ENCODE measurements at regions of chr6 and their contacts with region 1.

Region 1: GRCh38 chr6:20291764-20292580 is 79.7 kb upstream of the MBOAT1 start:
- DNase-seq: peak in 4 of 5 donors; percentile 64 to 76 (median 69)
- ATAC-seq: peak in 3 of 4 donors; percentile 80 to 95 (median 92)
- H3K4me3 ChIP-seq: no peak overlapping the region
- H3K27ac ChIP-seq: no peak overlapping the region
- H3K4me1 ChIP-seq: peaks cover 0 to 4% (median 0%) of the 10 kb centered on the region in 12 donors
- H3K27me3 ChIP-seq: no peaks in the 10 kb centered on the region
- CTCF ChIP-seq: peak; percentile 84 to 97 (median 92)
- POLR2A ChIP-seq: no peak

Region 2: GRCh38 chr6:20092071-20092566 is 199.9 kb before region 1 on chr6:
- intact Hi-C with region 1: loop called in 6 of 10 experiments (anchors 10 kb)
- DNase-seq: no peak
- ATAC-seq: no peak
- H3K4me3 ChIP-seq: no peak overlapping the region
- H3K27ac ChIP-seq: no peak overlapping the region
- H3K4me1 ChIP-seq: no peaks in the 10 kb centered on the region
- H3K27me3 ChIP-seq: no peaks in the 10 kb centered on the region
- CTCF ChIP-seq: peak; percentile 65 to 82 (median 71)
- POLR2A ChIP-seq: no peak

Region 3: GRCh38 chr6:20340068-20340848 is 48.3 kb after region 1 on chr6:
- intact Hi-C with region 1: no loop called
- DNase-seq: no peak
- ATAC-seq: peak in 3 of 4 donors; percentile 55 to 78 (median 59)
- H3K4me3 ChIP-seq: no peak overlapping the region
- H3K27ac ChIP-seq: no peak overlapping the region
- H3K4me1 ChIP-seq: peaks cover 0 to 13% (median 0%) of the 10 kb centered on the region in 12 donors
- H3K27me3 ChIP-seq: no peaks in the 10 kb centered on the region
- CTCF ChIP-seq: no peak
- POLR2A ChIP-seq: no peak

Region 4: DNA sequence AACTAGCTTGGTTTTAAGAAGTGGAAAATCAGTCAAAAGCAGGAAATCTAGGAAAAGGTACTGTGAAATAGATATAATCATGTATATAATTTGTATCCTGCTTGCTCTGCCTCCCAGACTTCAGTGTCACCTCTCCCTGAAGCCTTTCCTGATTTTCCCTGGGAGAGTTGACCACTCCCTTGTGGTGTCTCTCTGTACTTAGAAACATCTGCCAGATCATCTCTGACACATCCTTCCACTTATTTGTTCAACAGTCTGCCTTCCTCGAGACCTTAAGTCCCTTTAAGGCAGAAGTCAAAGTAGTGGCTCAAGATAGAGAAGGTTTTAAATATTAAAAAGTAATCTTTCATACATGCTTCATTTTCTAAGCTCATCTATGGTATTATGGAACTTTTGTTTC is 478.8 kb after region 1 on chr6:
- intact Hi-C with region 1: no loop called
- DNase-seq: no peak
- ATAC-seq: no peak
- H3K4me3 ChIP-seq: no peak overlapping the region
- H3K27ac ChIP-seq: no peak overlapping the region
- H3K4me1 ChIP-seq: peaks cover 0 to 8% (median 0%) of the 10 kb centered on the region in 12 donors
- H3K27me3 ChIP-seq: no peaks in the 10 kb centered on the region
- CTCF ChIP-seq: no peak
- POLR2A ChIP-seq: no peak

Measured in heart left ventricle (tissue), 16 donors.